Right ventricle myocardium superior (tissue), 1 donor: ENCODE measurements at regions of chr11 and their contacts with region 1.

Region 1: DNA sequence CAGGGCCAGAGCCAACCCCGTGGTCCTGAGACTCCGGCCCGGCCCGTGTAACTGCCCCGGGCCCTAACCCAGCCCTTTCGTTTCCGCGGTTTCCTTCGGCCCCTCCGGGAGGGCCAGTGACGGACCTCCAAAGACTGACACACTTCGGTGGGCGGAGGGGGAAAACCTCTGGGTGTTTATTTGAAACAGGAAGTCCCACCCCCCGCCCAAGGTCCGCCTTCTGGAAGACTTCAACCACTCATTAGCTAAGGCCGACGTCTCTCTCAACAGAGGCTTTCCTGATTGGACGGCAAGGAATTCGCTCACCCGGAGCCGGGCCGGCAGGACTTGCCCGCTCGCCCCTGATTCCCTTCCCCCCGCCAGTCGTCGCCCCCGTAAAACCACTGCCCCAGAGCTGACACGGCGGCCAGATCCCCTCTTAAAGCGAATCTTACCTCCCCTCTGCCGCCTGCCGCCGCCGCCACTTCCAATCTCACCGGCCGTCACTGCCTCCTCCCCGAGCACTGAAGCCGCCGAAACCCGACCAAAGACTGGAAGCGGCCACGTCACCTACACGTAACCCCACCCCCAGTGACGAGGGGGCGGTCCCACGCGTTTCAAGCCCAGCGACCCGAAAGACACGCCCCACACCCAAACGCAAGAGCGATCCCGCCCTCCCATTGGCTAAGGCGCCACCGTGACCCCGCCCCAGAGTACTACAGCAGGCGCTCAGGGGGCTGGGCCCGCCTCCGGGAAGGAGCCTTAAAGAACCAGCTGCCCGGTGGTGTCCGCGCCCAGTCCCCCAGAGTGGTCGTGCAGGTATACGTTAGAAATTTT is at the start of gene STX5:
- DNase-seq: peak; percentile 100
- ATAC-seq: peak; percentile 99
- total RNA-seq, gene STX5: 15.7 TPM

Region 2: DNA sequence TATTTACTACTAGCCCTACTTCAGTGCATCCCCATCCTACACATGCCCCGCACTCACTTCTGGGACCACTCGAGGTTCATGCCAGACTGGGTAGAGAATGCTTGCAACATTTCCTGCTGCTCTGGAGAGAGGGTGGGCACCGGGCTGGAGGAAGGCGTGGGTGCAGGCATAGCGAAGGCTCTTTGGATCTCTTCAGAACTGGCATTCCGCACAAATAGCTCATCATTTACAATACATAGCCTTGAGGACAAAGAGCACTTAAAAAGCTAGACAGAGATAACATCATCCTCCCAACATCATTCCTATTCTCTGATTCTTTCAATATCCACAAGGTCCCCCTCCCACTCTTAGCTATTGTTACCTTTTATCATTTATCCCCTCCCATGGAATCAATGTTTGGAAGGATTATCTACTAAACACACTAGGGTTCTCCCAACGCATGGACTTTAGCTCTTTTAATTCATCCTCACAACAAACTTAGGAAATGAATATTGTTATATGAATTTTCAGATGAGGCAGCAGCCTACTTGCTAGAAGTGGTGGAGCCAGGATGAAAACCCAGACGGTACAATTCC is 37.4 kb before region 1 on chr11:
- intact Hi-C with region 1: loop called (anchors 2 kb)
- DNase-seq: peak; percentile 4
- ATAC-seq: no peak